ENCODE measurements at regions of chr1 and their contacts with region 1.

Region 1: GRCh38 chr1:84892705-84893618 is at the start of gene LPAR3:
- DNase-seq: peak; percentile 66
- ATAC-seq: peak; percentile 83
- total RNA-seq, gene LPAR3: 16.6 TPM

Region 2: DNA sequence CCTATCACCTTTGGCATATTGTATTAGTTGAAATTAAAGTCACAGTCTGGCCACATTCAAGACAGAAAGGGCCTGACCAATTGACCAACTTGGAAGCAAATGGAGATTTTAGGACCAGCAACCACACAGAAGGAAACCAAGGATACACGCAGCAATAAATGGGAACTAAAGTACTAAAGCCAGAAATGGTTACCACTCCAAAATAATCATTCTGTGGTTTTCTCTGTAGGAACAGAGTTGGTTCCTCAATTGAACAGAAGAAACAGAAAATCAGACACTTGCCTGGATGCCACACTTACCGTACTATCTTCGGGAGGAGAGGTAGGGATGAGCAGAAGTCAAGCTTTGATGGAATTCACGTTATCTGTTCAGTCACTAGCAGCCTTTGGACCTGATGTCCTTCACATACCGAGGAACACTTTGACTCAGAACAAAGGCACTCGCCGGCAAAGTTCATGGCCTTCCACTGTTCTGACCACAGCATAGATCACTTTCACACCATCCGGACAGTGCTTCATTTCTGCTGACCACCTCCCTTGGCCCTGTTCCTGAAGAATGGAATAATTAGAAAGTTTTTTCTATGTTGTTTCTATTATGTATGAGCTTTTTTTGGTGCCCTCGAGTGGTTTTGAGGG is 96.9 kb before region 1 on chr1:
- intact Hi-C with region 1: loop called (anchors 2 kb)
- DNase-seq: no peak
- ATAC-seq: peak; percentile 29

Measured in Right ventricle myocardium inferior (tissue), 1 donor.